ENCODE measurements at regions of chr19 and their contacts with region 1.

Region 1: GRCh38 chr19:36772311-36773222 is at the start of gene ZNF850:
- DNase-seq: peak; percentile 68 to 95
- H3K4me3 ChIP-seq: peak within 1 kb of the TSS; percentile 83 to 100 (median 96)
- H3K27ac ChIP-seq: peak within 1 kb of the TSS; percentile 96
- H3K4me1 ChIP-seq: no peaks in the 10 kb centered on the region; a peak in 1 of 7 replicates
- H3K27me3 ChIP-seq: no peaks in the 10 kb centered on the region
- CTCF ChIP-seq: no peak
- EP300 ChIP-seq: no peak
- POLR2A ChIP-seq: peak; percentile 66 to 67; a peak in 2 of 3 replicates
- RAD21 ChIP-seq: no peak
- total RNA-seq, gene ZNF850: 18.0 and 21.2 TPM in 2 replicates

Region 2: GRCh38 chr19:36514012-36514612 is 258.5 kb before region 1 on chr19:
- CTCF ChIA-PET with region 1: no interaction called
- POLR2A ChIA-PET with region 1: no interaction called
- DNase-seq: no peak
- H3K4me3 ChIP-seq: peak overlapping the region in 1 of 4 experiments; percentile 19; a peak in 1 of 8 replicates
- H3K27ac ChIP-seq: no peak overlapping the region
- H3K4me1 ChIP-seq: no peaks in the 10 kb centered on the region
- H3K27me3 ChIP-seq: no peaks in the 10 kb centered on the region
- CTCF ChIP-seq: no peak
- EP300 ChIP-seq: no peak
- POLR2A ChIP-seq: no peak
- RAD21 ChIP-seq: no peak

Region 3: DNA sequence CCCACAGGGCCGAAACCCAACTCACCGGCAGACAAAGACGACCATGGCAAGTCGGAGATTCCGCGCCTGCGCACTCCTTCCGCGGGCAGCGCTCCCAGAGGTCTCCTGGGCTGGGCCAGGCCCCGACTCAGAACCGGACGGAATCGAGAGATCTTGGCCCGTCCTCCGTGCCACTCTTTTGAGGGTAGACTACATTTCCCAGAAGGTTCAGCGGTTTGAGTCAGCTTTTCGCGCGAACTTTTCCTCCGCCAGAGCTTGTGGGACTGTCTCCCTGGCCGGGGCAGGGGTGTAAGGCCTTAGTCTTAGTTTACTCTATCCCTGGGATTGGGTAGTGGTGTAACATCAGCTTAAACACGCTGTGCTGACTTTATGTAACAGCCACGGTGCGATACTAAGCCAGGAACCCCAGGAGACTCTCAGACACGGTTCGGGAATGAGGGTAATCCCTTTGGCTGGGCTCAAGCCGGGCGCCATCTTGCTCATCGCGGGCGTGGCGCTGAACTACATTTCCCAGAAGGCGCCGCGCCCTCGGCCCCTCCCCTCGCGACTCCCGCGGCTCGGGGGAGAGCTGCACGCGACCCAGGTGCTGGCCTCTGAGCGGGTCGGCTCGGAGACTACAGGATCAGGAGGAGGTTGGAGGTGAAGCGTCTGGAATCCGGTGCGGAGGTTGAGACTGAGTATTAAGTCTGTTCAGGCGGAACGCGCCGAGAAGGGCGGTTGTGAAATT is 244.2 kb before region 1 on chr19 and contains the start of gene ZNF260:
- CTCF ChIA-PET with region 1: no interaction called
- POLR2A ChIA-PET with region 1: interaction called, 14 read pairs
- DNase-seq: peak; percentile 92 to 96
- H3K4me3 ChIP-seq: peak within 1 kb of the TSS; percentile 72 to 98 (median 85)
- H3K27ac ChIP-seq: peak within 1 kb of the TSS; percentile 99
- H3K4me1 ChIP-seq: peaks cover 0 to 4% (median 2%) of the 10 kb centered on the region in 4 experiments; a peak in 6 of 7 replicates
- H3K27me3 ChIP-seq: no peaks in the 10 kb centered on the region
- CTCF ChIP-seq: no peak
- EP300 ChIP-seq: 0 out of 3 replicates have a peak, but pooled peaks of 1 of the 2 experiments have one; percentile 8
- POLR2A ChIP-seq: peak; percentile 80 to 84; a peak in 2 of 3 replicates
- RAD21 ChIP-seq: no peak
- total RNA-seq, gene ZNF260: 30.7 and 32.3 TPM in 2 replicates

Region 4: DNA sequence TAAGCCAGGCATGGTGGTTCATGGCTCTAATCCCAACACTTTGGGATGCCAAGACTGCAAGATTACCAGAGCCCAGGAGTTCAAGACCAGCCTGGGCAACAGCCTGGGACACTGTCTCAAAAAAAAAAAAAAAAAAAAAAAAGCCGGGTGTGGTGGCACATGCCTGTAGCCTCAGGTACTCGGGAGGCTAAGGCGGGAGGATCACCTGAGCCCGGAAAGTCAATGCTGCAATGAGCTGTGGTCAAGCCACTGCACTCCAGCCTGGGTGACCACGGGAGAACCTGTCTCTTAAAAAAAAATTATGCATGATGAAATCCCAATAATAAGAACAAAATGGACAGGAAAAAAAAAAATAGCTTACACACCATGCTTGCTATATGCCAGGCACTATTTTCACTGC is 19.3 kb before region 1 on chr19:
- CTCF ChIA-PET with region 1: interaction called, 3 read pairs
- POLR2A ChIA-PET with region 1: interaction called, 12 read pairs
- DNase-seq: no peak
- H3K4me3 ChIP-seq: no peak overlapping the region
- H3K27ac ChIP-seq: no peak overlapping the region
- H3K4me1 ChIP-seq: no peaks in the 10 kb centered on the region
- H3K27me3 ChIP-seq: no peaks in the 10 kb centered on the region
- CTCF ChIP-seq: no peak
- EP300 ChIP-seq: no peak
- POLR2A ChIP-seq: no peak
- RAD21 ChIP-seq: no peak

Region 5: GRCh38 chr19:36796076-36796992 is 23.8 kb after region 1 on chr19:
- CTCF ChIA-PET with region 1: interaction called, 4 read pairs
- POLR2A ChIA-PET with region 1: interaction called, 38 read pairs
- DNase-seq: no peak
- H3K4me3 ChIP-seq: peak overlapping the region; percentile 40 to 99 (median 68); a peak in 7 of 8 replicates
- H3K27ac ChIP-seq: peak overlapping the region; percentile 80
- H3K4me1 ChIP-seq: no peaks in the 10 kb centered on the region
- H3K27me3 ChIP-seq: no peaks in the 10 kb centered on the region
- CTCF ChIP-seq: no peak
- EP300 ChIP-seq: no peak
- POLR2A ChIP-seq: no peak
- RAD21 ChIP-seq: no peak

Region 6: DNA sequence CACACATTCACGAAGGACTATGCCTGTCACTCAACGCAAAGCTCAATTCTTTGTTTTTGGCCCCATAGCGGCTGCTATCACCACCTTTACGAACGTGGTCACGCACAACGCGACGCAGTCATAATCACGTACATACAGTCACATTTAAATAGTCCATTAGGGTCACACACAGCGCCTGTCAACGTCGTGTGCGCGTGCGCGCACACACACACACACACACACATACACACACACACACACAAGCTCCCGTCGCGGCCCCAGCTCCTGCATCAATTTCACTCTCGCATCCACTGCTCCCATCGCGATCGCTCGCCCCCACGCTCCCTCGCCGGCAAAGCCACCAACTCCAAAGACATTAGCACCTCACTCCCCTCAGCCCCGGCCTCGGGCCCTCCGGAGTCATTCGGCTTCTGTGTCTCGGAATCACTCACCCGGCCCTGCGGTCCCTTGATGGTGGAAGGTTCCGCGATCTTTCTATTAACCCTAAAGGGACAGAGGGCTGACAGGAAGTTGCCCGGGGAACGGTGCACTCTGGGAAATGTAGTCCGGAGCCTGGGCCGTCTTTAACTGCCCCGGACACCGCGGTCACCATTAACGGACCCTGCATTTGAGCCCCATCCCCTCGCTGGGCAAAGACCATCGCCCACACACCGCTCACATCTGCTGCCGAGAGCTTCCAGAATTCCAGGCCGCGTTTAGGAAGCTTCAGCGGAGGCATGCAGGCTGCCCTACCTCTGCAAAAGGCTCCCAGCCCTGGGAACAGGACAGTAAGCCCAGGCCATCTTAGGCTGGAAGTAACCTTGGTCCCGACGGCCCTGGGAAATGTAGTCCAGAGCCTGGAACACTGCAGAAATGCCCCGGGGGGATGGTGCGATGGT is 65.6 kb after region 1 on chr19 and contains the start of gene ZNF790:
- CTCF ChIA-PET with region 1: no interaction called
- POLR2A ChIA-PET with region 1: interaction called, 19 read pairs
- DNase-seq: peak in 1 of 2 experiments; percentile 86
- H3K4me3 ChIP-seq: peak within 1 kb of the TSS; percentile 77 to 98 (median 93)
- H3K27ac ChIP-seq: peak within 1 kb of the TSS; percentile 88; the same call in 1 of the 2 replicates
- H3K4me1 ChIP-seq: peaks cover 0 to 2% (median 0%) of the 10 kb centered on the region in 4 experiments; a peak in 1 of 7 replicates
- H3K27me3 ChIP-seq: peaks cover 0 to 1% (median 0%) of the 10 kb centered on the region in 4 experiments; a peak in 1 of 7 replicates
- CTCF ChIP-seq: no peak
- EP300 ChIP-seq: no peak
- POLR2A ChIP-seq: peak; percentile 53 to 59
- RAD21 ChIP-seq: no peak
- total RNA-seq, gene ZNF790: 7.2 and 7.5 TPM in 2 replicates

Region 7: DNA sequence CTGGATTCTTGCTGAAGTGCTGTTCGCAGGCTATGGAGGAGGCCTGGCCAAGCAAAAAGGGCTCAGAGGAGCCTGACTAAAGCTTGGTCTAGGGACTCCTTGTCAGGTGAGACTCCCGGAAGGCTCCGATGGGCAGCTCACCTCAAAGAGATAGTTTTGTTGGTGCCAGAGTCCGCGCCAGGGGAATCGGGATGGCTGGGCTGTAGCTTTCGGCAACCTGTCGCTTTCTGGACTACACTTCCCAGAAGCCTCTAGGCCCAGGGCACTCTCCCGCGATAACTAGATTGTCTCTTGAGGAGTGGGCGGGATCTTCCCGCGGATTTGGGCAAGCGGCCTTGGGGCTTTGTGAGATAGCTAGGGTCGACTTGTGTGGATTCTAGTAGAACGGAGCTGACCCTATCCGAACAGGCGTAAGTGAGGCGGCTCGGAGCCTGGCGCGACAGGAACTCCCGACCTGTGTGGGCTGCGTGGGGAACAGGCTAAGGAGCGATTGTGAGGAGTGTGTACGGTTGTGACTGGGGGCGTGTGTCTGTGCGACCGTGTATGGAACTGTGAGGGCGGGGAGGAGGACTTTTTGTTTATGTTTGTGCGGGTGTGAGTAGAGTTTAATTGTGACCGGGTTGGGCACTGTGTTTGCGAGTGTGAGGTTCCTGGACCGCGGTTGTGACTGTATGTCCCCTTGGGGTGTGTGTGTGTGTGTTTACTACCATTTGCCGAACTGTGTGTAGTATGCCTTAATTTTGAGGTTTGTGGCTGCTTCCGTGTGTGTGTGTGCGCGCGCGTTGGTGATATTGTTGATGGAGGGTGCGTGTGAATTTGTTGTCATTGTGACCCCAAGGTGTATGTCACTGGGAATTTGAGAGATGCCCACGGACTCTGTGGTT is 78.2 kb after region 1 on chr19 and contains the start of gene ZNF345:
- CTCF ChIA-PET with region 1: no interaction called
- POLR2A ChIA-PET with region 1: interaction called, 15 read pairs
- DNase-seq: peak in 1 of 2 experiments; percentile 86
- H3K4me3 ChIP-seq: peak within 1 kb of the TSS; percentile 89 to 99 (median 96)
- H3K27ac ChIP-seq: peak within 1 kb of the TSS; percentile 85
- H3K4me1 ChIP-seq: peaks cover 0 to 2% (median 0%) of the 10 kb centered on the region in 4 experiments; a peak in 3 of 7 replicates
- H3K27me3 ChIP-seq: no peaks in the 10 kb centered on the region
- CTCF ChIP-seq: no peak
- EP300 ChIP-seq: no peak
- POLR2A ChIP-seq: peak; percentile 64 to 85; a peak in 2 of 3 replicates
- RAD21 ChIP-seq: no peak
- total RNA-seq, gene ZNF345: 5.1 TPM in 2 replicates

Measured in H1 (cell line).